ENCODE measurements at regions of chr1 and their contacts with region 1.

Region 1: DNA sequence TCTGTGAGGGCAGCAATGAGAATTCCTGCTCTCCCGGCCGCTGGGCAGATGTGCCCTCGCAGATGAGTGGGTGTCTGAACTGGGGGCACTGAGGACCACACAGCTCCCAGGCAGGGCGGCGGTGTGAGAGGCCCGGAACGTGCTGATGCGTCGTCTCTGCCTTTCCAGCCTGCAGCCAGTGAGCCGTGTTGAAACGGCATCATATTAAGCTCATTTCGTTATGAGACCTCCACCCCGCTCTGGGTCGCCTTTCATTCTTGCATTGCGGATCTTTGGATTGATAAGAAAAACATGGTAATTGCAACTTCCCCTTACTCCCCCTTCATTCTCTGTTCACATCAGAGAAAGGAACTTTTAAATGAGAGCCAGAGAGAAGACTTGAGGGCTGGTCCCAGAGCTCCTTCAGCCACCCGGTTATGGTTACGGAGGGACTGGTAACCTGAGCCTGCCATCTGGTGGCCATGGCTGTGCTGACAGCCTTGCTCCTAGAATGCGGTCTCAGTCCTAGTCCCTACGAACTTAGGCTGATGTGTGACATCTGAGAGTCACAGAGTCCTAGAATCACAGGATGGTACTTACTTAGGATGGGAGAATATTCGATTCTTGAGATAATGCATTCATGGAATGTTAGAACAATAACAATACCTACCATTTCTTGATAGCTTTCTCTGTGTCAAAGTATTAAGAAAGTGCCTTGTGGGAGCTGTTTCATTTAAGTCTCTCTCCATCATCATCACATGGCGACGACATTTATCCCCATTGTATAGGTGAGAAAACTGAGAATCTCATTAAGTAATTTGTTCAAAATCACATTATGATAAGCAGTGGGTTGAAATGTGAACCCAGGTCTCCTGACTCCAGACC is 271.0 kb downstream of the TRABD2B start:
- DNase-seq: peak; percentile 85
- ATAC-seq: peak; percentile 80
- H3K4me3 Mint-ChIP-seq: peak overlapping the region; percentile 39
- H3K27ac Mint-ChIP-seq: no peak overlapping the region
- H3K4me1 Mint-ChIP-seq: peaks cover 15% of the 10 kb centered on the region
- H3K27me3 Mint-ChIP-seq: peaks cover 71% of the 10 kb centered on the region
- CTCF ChIP-seq: peak; percentile 74

Region 2: DNA sequence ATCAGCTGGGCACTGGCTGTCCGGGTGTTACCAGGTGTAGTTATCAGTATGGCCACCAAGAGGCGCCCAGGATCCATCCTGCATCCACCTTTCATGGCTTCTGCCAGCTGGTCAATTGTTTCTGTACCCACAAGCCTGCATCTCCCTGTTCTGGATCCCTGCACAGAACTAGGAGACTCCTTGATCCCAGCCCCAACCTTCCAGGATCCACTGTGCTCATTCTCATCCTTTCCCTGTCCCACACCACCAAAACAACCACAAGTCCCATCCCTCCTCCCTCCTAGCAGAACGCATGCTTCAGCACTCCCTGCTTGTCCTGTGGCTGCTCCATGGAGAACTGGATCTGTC is 337.4 kb before region 1 on chr1:
- CTCF ChIA-PET with region 1: interaction called, 35 read pairs
- POLR2A ChIA-PET with region 1: no interaction called
- DNase-seq: peak; percentile 79
- ATAC-seq: peak; percentile 96
- H3K4me3 Mint-ChIP-seq: no peak overlapping the region
- H3K27ac Mint-ChIP-seq: no peak overlapping the region
- H3K4me1 Mint-ChIP-seq: no peaks in the 10 kb centered on the region
- H3K27me3 Mint-ChIP-seq: peaks cover 25% of the 10 kb centered on the region
- CTCF ChIP-seq: peak; percentile 77

Region 3: DNA sequence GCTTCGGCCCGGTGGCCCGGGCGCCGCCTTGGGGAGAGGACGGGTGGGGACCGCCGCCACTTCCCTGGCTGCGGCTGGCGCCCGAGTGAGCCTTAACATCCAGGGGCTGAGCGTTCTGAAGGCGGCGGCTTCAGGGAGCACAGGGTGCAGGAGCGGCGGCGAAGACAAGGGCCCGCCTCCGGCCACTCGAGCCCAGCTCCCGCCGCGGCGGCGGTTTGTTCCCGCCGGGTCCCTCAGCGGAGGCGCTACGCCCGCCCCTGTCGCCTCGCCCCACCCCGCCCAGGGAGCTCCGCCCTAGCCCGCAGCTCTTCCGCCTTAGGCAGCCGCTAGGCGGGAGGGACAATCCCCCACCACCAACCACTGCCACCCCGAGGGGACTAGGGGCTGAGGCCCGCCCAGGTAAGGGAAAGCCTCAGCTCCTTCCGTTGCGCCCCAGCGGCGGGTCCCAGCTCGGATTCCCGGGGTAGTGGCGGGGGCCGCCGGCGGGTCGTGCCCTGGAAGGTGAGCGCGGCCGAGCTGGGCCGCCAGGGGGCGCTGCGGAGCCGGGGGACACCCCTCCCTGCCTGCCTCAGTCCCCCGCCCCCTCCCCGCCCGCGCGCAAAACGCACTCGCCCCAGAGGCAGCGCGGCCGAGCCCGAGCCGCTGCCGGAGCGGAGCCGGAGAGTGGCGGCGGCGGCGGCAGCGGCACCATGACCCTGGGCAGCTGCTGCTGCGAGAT is 288.6 kb before region 1 on chr1 and contains the start of gene FOXD2:
- CTCF ChIA-PET with region 1: interaction called, 133 read pairs
- POLR2A ChIA-PET with region 1: no interaction called
- DNase-seq: peak; percentile 95
- ATAC-seq: peak; percentile 57
- H3K4me3 Mint-ChIP-seq: peak within 1 kb of the TSS; percentile 74
- H3K27ac Mint-ChIP-seq: no peak within 1 kb of the TSS
- H3K4me1 Mint-ChIP-seq: peaks cover 34% of the 10 kb centered on the region
- H3K27me3 Mint-ChIP-seq: peaks cover 49% of the 10 kb centered on the region
- CTCF ChIP-seq: peak; percentile 99
- total RNA-seq, gene FOXD2: 0.05 to 0.07 TPM (median 0.05 TPM) in 3 replicates

Region 4: DNA sequence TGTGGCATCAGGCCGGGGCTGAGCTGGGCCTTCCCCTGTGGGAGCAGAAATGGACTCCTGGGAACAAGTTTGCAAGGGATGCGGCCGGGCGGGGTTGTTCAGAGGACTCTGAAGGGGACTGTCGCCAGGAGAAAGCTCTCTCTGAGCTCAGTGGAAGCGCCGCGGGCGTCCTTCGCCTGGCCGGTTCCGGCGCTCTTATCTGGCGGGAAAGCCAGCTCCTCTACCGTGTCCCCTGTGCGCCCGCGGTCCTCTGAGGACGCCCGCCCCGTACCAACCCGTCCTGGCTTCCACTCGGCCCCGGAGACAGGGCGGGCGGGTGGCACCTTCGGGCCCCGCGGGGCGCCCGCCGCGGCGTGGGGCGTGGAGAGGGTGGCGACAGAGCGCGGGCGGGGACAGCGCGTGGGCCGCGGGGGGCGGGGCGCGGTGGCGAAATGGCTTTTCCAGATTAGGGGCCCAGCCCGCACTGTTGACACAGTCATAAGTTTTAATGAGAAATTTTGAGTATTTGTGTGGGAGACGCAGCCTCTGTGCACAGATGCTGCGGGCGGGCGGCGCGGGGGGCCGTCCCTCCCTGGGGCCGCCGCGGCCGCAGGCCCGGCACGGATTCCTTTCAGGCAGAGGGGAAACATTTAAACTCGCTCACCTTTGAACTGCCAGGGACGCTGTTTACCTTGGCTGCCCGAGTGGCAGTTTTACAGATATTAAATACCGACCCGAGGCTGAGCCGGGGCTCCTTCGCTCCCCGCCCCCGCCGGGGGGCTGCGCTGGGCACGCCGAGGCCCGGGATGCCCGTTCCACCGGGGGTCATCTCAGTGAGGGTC is 218.1 kb before region 1 on chr1:
- CTCF ChIA-PET with region 1: interaction called, 11 read pairs
- POLR2A ChIA-PET with region 1: no interaction called
- DNase-seq: peak; percentile 53
- ATAC-seq: peak; percentile 60
- H3K4me3 Mint-ChIP-seq: peak overlapping the region; percentile 77
- H3K27ac Mint-ChIP-seq: no peak overlapping the region
- H3K4me1 Mint-ChIP-seq: peaks cover 13% of the 10 kb centered on the region
- H3K27me3 Mint-ChIP-seq: peaks cover 89% of the 10 kb centered on the region
- CTCF ChIP-seq: no peak

Region 5: GRCh38 chr1:47627471-47628370 is 98.5 kb before region 1 on chr1:
- CTCF ChIA-PET with region 1: interaction called, 12 read pairs
- POLR2A ChIA-PET with region 1: no interaction called
- DNase-seq: no peak
- ATAC-seq: no peak
- H3K4me3 Mint-ChIP-seq: no peak overlapping the region
- H3K27ac Mint-ChIP-seq: no peak overlapping the region
- H3K4me1 Mint-ChIP-seq: peaks cover 6% of the 10 kb centered on the region
- H3K27me3 Mint-ChIP-seq: peaks cover 9% of the 10 kb centered on the region
- CTCF ChIP-seq: no peak

Region 6: DNA sequence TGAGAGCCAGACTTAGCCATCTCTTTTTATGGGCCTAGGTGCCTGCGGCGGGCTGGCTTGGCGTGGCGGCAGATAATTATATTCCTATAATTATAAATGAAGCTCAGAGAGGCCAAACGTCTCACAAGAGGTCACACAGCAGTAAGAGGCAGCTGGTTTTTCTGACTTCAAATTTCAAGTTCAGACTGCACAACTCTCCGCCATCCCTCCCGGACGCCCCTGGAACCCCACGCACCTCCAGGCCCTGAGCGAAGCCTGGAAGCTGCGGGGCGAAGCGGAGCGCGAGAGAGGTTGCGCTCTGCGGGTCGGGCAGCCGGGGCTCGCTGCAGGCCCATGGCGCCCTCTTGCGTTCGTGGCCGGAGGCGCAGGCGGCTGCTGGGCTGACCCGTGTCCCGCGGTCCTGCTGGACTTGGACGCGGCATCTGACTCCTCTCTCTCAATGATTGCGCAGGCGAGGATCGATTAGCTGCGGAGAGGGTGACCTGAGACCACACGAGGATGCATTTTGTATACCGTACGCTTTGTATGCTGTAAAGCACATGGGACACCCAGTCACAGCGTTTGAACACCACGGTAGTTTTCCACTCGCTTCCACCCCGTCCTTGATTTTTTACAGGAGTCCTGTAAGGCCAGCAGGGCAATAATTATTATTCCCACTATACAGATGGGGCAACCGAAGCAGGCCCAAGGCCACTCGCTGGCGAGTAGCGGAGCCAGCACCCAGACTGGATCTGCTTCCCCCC is 15.7 kb before region 1 on chr1:
- CTCF ChIA-PET with region 1: interaction called, 62 read pairs
- POLR2A ChIA-PET with region 1: interaction called, 3 read pairs
- DNase-seq: peak; percentile 86
- ATAC-seq: peak; percentile 56
- H3K4me3 Mint-ChIP-seq: peak overlapping the region; percentile 64
- H3K27ac Mint-ChIP-seq: no peak overlapping the region
- H3K4me1 Mint-ChIP-seq: peaks cover 29% of the 10 kb centered on the region
- H3K27me3 Mint-ChIP-seq: peaks cover 99% of the 10 kb centered on the region
- CTCF ChIP-seq: peak; percentile 97

Region 7: GRCh38 chr1:48061162-48062136 is 335.2 kb after region 1 on chr1:
- CTCF ChIA-PET with region 1: interaction called, 10 read pairs
- POLR2A ChIA-PET with region 1: no interaction called
- DNase-seq: peak; percentile 72
- ATAC-seq: peak; percentile 85
- H3K4me3 Mint-ChIP-seq: no peak overlapping the region
- H3K27ac Mint-ChIP-seq: no peak overlapping the region
- H3K4me1 Mint-ChIP-seq: peaks cover 8% of the 10 kb centered on the region
- H3K27me3 Mint-ChIP-seq: peaks cover 26% of the 10 kb centered on the region
- CTCF ChIP-seq: peak; percentile 57

Measured in WTC11 (cell line).